Activated CD4-positive, alpha-beta T cell treated with anti-CD3 and anti-CD28 coated beads for 36 hours (primary cell): ENCODE measurements at regions of chr2 and their contacts with region 1.

Region 1: DNA sequence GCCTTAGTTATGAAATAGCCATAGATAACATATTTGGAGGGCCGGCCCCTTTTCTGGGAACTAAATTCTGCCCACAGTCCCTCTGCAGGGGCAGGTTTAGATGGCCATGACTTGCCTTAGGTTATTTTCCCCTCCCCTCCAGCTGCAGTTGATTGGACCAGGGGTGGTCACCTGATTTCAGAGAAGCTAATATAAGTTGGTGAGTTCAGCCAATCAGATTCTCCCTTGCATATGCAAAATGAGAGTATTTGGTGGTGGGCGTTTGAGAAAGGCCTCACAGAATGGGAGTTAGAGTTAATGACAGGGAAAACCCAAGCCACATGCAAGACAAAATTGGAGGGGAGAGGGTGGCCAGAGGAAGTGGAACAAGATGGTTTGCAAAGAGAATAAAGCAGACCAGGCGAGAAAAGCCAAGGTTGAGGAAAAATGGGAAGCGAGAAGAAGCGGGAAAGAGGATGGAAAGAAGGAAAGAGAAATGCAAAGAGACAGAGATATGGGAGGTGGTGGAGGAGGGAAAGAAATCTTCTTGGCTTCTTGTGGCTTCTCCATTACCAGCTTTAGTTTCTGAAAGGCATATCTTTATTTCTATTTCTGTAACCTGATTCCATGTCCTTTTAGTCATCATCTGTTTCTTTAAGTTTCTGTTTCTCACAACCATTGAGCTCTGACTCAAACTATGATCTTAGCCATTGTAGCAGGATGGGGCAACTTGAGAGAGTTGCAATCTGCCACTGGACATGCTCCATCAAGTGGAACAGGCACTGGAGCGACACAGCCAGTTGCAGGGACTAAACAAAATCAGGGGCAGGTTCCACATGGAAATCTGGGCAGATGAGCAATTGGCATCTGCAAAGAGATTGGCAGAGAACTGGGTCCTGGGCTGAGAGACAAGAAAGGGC is 108.1 kb upstream of the SIX3 start:
- DNase-seq: peak; percentile 21
- ATAC-seq: peak; percentile 24
- H3K4me3 Mint-ChIP-seq: no peak overlapping the region
- H3K27ac Mint-ChIP-seq: peak overlapping the region; percentile 78
- H3K4me1 Mint-ChIP-seq: peaks cover 31% of the 10 kb centered on the region
- H3K27me3 Mint-ChIP-seq: peaks cover 11% of the 10 kb centered on the region

Region 2: GRCh38 chr2:43576981-43577892 is 1256.2 kb before region 1 on chr2:
- CTCF ChIA-PET with region 1: no interaction called
- POLR2A ChIA-PET with region 1: no interaction called
- intact Hi-C with region 1: no loop called
- DNase-seq: peak; percentile 46
- ATAC-seq: peak; percentile 42
- H3K4me3 Mint-ChIP-seq: no peak overlapping the region
- H3K27ac Mint-ChIP-seq: no peak overlapping the region
- H3K4me1 Mint-ChIP-seq: peaks cover 15% of the 10 kb centered on the region
- H3K27me3 Mint-ChIP-seq: no peaks in the 10 kb centered on the region

Region 3: GRCh38 chr2:44120428-44120827 is 713.0 kb before region 1 on chr2:
- CTCF ChIA-PET with region 1: no interaction called
- POLR2A ChIA-PET with region 1: no interaction called
- intact Hi-C with region 1: loop called in 1 of 2 experiments (anchors 2 kb)
- DNase-seq: peak; percentile 38
- ATAC-seq: peak; percentile 78
- H3K4me3 Mint-ChIP-seq: no peak overlapping the region
- H3K27ac Mint-ChIP-seq: no peak overlapping the region
- H3K4me1 Mint-ChIP-seq: peaks cover 36% of the 10 kb centered on the region
- H3K27me3 Mint-ChIP-seq: peaks cover 2% of the 10 kb centered on the region

Region 4: DNA sequence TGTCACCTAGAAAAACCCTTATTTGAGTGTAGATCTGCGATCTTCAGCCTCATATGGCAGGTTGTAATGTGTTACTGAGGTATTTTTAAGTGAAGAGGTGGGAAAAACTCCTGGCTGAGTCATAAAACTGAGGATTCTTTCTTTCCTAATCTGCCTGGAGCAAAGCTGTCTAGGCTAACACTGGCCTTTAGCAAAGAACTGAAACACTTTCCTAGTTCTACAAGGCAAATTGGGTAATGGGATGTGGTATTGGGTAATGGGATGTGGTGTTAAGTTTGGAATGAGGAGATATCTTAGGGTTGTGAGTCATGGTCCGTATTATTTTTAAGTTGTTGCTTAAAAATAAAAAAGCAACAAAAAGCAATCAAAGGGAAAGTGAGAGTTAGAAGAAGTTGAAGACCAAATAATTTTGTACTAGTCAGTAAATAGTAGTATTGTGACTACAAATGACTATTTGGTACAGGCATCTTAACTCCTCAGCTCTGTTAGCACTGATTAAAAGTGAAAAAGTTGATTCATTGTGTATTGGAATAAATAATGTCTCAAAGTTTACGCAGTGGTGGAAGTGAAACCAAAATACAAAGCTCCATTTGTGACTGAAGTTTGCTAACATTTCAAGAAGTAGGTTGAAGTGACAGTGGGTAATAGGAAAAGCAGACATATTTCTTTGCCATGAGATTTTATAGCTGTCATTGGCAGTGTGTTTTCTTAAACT is 254.8 kb before region 1 on chr2:
- CTCF ChIA-PET with region 1: no interaction called
- POLR2A ChIA-PET with region 1: no interaction called
- intact Hi-C with region 1: loop called in 1 of 2 experiments (anchors 1 kb)
- DNase-seq: no peak
- ATAC-seq: peak; percentile 96
- H3K4me3 Mint-ChIP-seq: peak overlapping the region; percentile 34
- H3K27ac Mint-ChIP-seq: peak overlapping the region; percentile 83
- H3K4me1 Mint-ChIP-seq: peaks cover 32% of the 10 kb centered on the region
- H3K27me3 Mint-ChIP-seq: no peaks in the 10 kb centered on the region

Region 5: DNA sequence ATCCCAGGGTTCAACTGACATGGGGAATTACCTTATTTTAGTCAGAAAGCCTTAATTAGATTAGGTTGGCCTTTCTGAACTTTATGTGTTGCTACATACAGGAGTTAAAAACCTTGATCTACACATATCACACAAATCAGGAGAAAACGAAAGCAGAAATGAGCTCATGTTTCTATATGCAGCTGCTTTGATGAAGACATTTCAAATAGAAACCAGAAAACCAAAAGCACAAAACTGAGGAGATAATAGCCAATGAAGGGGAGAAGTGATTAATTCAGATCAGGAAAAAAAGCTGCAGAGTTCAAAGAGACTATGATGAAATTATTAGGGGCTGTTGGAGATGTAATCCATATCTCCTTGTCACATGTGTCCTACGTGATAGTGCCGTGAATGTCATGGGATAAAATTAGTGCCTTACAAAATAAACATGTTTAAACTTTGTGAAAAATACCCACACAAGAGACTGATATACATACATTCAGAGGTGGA is 216.7 kb before region 1 on chr2:
- CTCF ChIA-PET with region 1: no interaction called
- POLR2A ChIA-PET with region 1: no interaction called
- intact Hi-C with region 1: loop called (anchors 1 kb)
- DNase-seq: no peak
- ATAC-seq: peak; percentile 96
- H3K4me3 Mint-ChIP-seq: no peak overlapping the region
- H3K27ac Mint-ChIP-seq: no peak overlapping the region
- H3K4me1 Mint-ChIP-seq: peaks cover 13% of the 10 kb centered on the region
- H3K27me3 Mint-ChIP-seq: no peaks in the 10 kb centered on the region

Region 6: DNA sequence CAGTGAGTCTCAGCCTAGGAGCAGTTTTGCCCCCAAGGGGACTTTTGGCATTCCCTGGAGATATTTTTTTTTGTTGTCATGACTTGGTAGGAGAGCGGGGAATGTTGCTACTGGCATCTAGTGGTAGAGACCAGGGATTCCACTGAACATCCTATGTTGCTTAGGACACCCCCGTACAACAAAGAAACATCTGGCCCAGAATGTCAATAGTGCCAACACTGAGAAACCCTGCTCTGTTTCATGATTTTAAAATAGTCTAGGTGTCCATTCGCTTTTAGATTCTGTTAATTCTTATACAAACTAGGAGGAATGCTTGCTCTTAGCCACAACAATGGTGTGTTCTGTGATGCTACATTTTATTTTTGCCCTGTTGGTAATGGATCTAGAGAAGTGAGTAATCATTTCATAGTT is 117.7 kb before region 1 on chr2:
- CTCF ChIA-PET with region 1: no interaction called
- POLR2A ChIA-PET with region 1: no interaction called
- intact Hi-C with region 1: no loop called
- DNase-seq: no peak
- ATAC-seq: no peak
- H3K4me3 Mint-ChIP-seq: no peak overlapping the region
- H3K27ac Mint-ChIP-seq: no peak overlapping the region
- H3K4me1 Mint-ChIP-seq: no peaks in the 10 kb centered on the region
- H3K27me3 Mint-ChIP-seq: no peaks in the 10 kb centered on the region

Region 7: GRCh38 chr2:44894058-44894457 is 60.6 kb after region 1 on chr2:
- CTCF ChIA-PET with region 1: no interaction called
- POLR2A ChIA-PET with region 1: no interaction called
- intact Hi-C with region 1: loop called in 1 of 2 experiments (anchors 1 kb)
- DNase-seq: peak; percentile 62
- ATAC-seq: peak; percentile 86
- H3K4me3 Mint-ChIP-seq: no peak overlapping the region
- H3K27ac Mint-ChIP-seq: peak overlapping the region; percentile 29
- H3K4me1 Mint-ChIP-seq: peaks cover 12% of the 10 kb centered on the region
- H3K27me3 Mint-ChIP-seq: peaks cover 13% of the 10 kb centered on the region